ENCODE measurements at regions of chr9 and their contacts with region 1.

Region 1: GRCh38 chr9:120936011-120936763 is 9.6 kb upstream of the TRAF1 start:
- DNase-seq: peak; percentile 96
- ATAC-seq: peak; percentile 63
- H3K4me3 Mint-ChIP-seq: peak overlapping the region; percentile 57
- H3K27ac Mint-ChIP-seq: peak overlapping the region; percentile 100
- H3K4me1 Mint-ChIP-seq: peaks cover 63% of the 10 kb centered on the region
- H3K27me3 Mint-ChIP-seq: no peaks in the 10 kb centered on the region
- CTCF ChIP-seq: peak; percentile 98

Region 2: GRCh38 chr9:120868676-120869359 is 67.4 kb before region 1 on chr9:
- CTCF ChIA-PET with region 1: interaction called, 7 read pairs
- POLR2A ChIA-PET with region 1: interaction called, 2,439 read pairs
- intact Hi-C with region 1: no loop called
- DNase-seq: peak; percentile 98
- ATAC-seq: peak; percentile 91
- H3K4me3 Mint-ChIP-seq: peak overlapping the region; percentile 81
- H3K27ac Mint-ChIP-seq: peak overlapping the region; percentile 97
- H3K4me1 Mint-ChIP-seq: peaks cover 47% of the 10 kb centered on the region
- H3K27me3 Mint-ChIP-seq: no peaks in the 10 kb centered on the region
- CTCF ChIP-seq: peak; percentile 51

Region 3: DNA sequence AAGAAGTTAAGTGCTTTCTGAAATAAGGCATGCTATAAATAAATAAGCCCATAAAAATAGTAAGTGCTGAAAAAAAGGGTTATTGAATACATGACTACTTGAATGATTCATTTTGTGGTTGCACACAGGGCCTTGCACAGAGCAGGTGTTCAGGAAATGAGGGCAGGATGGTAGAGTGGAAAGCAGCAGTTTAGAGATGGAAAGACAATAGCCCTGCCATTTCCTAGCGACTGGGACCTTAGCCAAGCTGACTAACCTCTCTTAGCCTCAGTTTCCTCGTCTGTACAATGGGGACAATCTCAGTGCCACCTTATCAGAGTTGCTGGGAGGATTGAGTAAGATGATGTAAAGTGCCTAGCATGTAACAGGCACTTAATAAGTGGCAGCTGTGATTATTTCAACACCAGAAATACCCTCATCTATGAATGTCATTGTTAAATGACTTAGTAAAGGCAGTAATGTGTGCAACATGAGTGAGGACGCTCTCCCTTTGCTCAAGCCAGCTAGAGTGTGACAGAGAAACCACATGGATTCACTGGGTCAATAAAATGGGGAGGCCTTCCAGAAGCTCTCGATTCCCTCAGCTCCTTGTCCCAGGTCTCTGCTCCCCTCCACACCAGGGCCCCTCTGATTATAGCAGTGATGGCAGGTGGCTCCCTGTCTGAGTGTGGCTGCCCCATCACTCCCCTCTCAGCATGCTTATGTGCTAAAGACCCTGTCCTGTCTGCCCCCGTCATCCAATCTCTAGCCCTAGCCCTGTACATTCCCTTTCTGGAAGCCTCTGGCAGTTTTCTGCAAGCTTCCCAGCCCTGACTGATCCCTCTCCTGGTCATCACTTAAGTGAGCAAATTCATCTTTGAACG is 43.2 kb before region 1 on chr9:
- CTCF ChIA-PET with region 1: interaction called, 7 read pairs
- POLR2A ChIA-PET with region 1: interaction called, 2,439 read pairs
- intact Hi-C with region 1: loop called (anchors 1 kb)
- DNase-seq: peak; percentile 83
- ATAC-seq: peak; percentile 38
- H3K4me3 Mint-ChIP-seq: peak overlapping the region; percentile 79
- H3K27ac Mint-ChIP-seq: peak overlapping the region; percentile 98
- H3K4me1 Mint-ChIP-seq: peaks cover 84% of the 10 kb centered on the region
- H3K27me3 Mint-ChIP-seq: no peaks in the 10 kb centered on the region
- CTCF ChIP-seq: no peak

Region 4: DNA sequence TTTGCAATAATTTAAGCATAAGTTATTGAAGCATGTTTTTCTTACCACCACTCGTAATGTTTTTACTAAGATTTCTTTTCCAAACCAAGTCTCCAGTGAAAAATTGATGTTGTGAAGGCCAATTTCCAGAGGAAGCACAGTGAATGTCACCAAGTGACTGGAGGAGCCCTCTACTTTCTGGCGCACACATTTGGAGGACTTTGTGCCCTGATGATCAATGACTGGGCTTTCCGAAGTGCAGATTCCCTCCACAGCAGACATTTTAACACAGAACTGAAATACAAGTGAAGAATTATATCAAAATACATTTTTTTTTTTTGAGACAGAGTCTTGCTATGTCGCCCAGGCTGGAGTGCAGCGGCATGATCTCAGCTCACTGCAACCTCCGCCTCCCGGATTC is 61.3 kb after region 1 on chr9:
- CTCF ChIA-PET with region 1: no interaction called
- POLR2A ChIA-PET with region 1: no interaction called
- intact Hi-C with region 1: no loop called
- DNase-seq: no peak
- ATAC-seq: no peak
- H3K4me3 Mint-ChIP-seq: no peak overlapping the region
- H3K27ac Mint-ChIP-seq: no peak overlapping the region
- H3K4me1 Mint-ChIP-seq: no peaks in the 10 kb centered on the region
- H3K27me3 Mint-ChIP-seq: no peaks in the 10 kb centered on the region
- CTCF ChIP-seq: no peak

Region 5: DNA sequence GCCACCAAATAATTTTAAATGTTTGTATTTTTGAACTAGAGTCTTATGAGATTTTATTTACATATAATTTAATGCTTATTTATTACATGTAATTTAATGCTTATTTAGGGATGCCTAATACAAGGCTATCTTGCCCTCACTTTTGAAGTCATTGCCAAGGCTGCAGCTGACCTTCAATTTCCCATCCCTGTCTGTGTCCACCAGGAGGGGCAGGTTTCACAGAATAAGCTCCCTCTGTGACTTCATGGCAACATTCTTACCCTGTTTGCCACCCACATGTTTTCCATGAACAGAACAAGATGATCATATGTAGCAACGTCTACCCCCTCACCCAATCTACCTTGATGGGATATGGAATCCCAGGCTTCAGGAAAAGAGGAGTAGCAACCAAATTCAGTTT is 86.9 kb after region 1 on chr9:
- CTCF ChIA-PET with region 1: no interaction called
- POLR2A ChIA-PET with region 1: no interaction called
- intact Hi-C with region 1: no loop called
- DNase-seq: no peak
- ATAC-seq: no peak
- H3K4me3 Mint-ChIP-seq: no peak overlapping the region
- H3K27ac Mint-ChIP-seq: no peak overlapping the region
- H3K4me1 Mint-ChIP-seq: no peaks in the 10 kb centered on the region
- H3K27me3 Mint-ChIP-seq: no peaks in the 10 kb centered on the region
- CTCF ChIP-seq: no peak